Tibial artery (tissue), 4 donors: ENCODE measurements at regions of chr12 and their contacts with region 1.

Region 1: DNA sequence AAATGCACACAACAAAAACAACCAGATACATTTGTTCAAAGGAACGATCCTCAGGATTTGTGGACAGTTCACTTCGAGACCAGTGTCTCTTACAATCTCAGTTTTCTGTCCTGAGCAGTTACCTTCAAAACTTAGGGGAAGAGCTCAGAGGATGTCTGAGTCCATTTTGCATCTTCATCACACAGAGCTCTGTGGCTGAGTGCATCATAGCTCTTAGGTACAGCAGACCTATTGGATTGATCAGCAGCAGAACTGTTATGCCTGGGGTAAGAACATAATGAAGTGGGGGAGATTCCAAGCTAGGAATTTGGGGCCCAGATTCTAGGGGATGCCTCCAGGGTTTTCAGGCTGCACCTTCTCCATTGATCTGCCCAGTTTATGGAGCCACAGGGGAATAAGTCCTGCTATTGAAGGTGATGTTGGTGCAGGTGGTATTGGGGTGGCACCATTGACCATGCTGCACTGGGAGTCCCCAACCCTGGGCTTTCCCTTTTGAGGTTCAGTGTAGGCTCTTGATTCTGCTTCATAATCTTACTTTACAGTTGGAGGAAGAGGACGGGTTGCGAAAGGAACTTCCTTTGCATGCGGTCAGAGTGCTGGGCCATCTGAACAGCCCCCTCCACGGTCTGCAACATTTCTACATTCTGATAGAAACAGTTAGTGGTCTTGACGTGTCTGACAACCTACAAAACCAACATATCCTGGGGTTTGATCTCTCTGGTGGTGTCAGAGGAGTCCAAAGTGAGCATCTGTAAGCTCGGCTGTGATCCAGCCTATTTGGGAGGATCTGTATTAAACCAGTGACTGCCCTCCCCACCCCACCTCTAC is 112.8 kb downstream of the CHST11 start:
- DNase-seq: peak in 1 of 2 donors; percentile 35
- H3K4me3 ChIP-seq: no peak overlapping the region
- H3K27ac ChIP-seq: no peak overlapping the region
- H3K4me1 ChIP-seq: peaks cover 0 to 9% (median 0%) of the 10 kb centered on the region in 4 donors
- H3K27me3 ChIP-seq: no peaks in the 10 kb centered on the region
- CTCF ChIP-seq: no peak

Region 2: DNA sequence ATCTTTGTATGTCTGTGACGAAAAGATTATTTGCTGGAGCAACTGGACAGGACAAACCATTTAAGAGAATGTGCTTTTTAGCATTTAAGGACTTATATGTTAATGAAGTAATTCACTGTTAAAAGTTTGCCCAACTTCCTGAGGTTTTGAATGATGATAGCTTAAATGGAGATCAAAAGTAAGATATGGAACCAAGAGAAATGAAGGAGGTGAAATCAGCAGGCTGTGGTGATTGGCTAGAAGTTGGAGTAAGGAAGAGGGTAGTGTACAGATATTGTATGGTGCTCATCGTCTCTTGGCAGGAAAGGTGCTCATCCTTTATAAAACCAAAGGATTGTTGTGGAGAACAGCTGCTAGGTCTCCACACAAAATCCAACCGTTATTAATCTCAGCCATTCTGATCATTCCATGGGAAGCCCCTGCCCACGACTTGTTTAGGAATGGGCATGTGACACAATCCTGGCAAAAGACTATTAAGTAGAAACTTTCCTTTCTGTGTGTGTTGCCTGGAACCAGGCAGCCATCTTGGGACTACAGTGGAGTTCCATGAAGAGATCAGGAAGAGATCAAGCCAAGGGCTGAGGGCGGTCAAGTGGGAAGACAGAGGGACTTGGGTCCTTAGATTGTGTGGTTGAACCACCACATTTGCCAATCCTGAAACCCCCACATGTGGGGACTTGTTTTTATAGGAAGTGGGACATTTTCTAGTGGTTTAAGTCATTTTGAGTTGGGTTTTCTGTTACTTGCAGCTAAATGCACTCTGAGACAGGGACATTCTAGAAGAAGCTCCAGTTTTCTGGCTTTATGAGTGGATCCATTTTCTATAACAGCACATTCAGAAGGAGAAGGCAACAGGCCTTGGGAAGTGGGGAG is 169.6 kb before region 1 on chr12:
- intact Hi-C with region 1: no loop called
- DNase-seq: no peak
- H3K4me3 ChIP-seq: no peak overlapping the region
- H3K27ac ChIP-seq: no peak overlapping the region
- H3K4me1 ChIP-seq: no peaks in the 10 kb centered on the region
- H3K27me3 ChIP-seq: no peaks in the 10 kb centered on the region
- CTCF ChIP-seq: no peak

Region 3: DNA sequence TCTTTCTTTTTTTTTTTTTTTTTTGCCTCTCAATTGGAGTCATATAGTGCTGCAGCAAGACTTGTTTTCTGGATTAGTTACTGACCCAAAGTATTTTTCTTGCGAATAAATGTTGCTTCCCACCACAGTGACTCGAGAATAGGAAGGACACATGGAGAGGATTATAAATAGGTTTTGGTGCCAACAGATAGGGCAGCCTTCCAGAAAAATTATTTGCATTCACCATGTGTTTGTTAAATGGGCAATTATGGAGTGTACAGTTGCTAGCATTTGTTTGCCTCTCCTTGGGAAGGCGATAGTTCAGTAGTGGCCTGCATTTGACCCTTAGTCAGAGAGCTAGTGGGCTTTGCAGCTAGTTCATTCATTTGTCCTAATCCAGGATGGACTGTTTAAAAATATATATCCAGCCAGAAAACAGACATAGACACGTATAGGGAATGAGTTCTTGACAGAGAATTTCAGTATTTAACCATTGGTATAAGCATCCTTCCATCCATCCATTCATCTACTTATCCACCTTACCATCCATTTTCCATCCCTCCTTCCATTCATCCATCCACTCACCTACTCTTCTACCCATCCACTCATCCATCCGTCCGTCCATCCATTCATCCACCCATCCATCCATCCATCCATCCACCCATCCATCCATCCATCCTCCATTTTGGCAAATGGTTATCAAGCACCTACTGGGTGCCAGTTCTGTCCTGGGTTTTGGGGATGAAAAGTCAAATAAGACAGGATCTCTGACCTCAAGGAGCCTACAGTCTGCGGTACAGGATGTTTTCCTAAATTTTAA is 45.3 kb before region 1 on chr12:
- intact Hi-C with region 1: loop called (anchors 2 kb)
- DNase-seq: no peak
- H3K4me3 ChIP-seq: no peak overlapping the region
- H3K27ac ChIP-seq: no peak overlapping the region
- H3K4me1 ChIP-seq: peaks cover 0 to 43% (median 10%) of the 10 kb centered on the region in 4 donors
- H3K27me3 ChIP-seq: no peaks in the 10 kb centered on the region
- CTCF ChIP-seq: no peak

Region 4: GRCh38 chr12:104632724-104633201 is 63.2 kb after region 1 on chr12:
- intact Hi-C with region 1: no loop called
- DNase-seq: no peak
- H3K4me3 ChIP-seq: no peak overlapping the region
- H3K27ac ChIP-seq: no peak overlapping the region
- H3K4me1 ChIP-seq: peaks cover 0 to 11% (median 9%) of the 10 kb centered on the region in 4 donors
- H3K27me3 ChIP-seq: no peaks in the 10 kb centered on the region
- CTCF ChIP-seq: no peak